MCF 10A (cell line): ENCODE measurements at regions of chr5 and their contacts with region 1.

Region 1: DNA sequence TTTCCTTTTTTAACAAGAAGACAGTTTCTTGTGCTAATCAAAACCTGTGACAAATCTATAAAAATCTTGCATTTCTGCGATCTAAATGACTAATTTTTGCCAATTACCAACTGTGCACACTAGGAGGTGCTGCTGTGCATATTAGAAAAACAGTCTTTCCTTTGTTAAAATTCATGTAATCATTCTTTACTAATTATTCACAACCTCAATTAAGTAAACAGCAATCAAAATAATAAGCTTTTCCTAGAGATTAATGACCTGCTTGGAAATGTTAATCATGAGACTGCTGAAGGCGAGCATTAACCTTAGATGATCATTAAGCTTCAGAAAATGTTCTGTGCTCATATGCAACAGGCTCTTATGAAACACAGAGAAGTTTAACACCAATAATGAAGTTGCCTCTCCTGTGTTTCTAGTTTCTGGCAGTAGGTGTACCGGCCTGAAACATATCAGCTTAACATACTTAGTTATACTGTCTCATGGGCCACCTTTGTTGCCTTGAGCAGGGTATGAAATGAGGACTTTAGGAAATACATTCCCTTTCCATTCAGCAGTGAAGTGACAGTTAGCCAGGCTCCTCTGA is 17.7 kb downstream of the RFESD start:
- DNase-seq: peak; percentile 46
- H3K4me3 Mint-ChIP-seq: no peak overlapping the region
- H3K27ac Mint-ChIP-seq: no peak overlapping the region
- H3K4me1 Mint-ChIP-seq: no peaks in the 10 kb centered on the region
- H3K27me3 Mint-ChIP-seq: no peaks in the 10 kb centered on the region
- CTCF ChIP-seq: peak; percentile 56

Region 2: DNA sequence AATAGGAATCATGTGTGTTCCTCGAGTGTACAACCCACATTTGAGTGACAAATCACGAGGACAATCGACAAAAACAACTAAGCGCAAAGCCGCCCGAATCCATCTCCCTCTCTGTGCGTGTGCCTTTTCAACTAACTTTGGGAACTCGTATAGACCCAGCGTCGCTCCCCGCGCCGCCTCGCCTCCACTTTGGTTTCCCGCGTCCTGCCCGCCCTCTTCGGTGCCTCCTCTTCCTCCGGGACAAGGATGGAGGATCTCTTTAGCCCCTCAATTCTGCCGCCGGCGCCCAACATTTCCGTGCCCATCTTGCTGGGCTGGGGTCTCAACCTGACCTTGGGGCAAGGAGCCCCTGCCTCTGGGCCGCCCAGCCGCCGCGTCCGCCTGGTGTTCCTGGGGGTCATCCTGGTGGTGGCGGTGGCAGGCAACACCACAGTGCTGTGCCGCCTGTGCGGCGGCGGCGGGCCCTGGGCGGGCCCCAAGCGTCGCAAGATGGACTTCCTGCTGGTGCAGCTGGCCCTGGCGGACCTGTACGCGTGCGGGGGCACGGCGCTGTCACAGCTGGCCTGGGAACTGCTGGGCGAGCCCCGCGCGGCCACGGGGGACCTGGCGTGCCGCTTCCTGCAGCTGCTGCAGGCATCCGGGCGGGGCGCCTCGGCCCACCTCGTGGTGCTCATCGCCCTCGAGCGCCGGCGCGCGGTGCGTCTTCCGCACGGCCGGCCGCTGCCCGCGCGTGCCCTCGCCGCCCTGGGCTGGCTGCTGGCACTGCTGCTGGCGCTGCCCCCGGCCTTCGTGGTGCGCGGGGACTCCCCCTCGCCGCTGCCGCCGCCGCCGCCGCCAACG is 44.0 kb before region 1 on chr5 and contains the start of gene GPR150:
- CTCF ChIA-PET with region 1: no interaction called
- POLR2A ChIA-PET with region 1: no interaction called
- intact Hi-C with region 1: no loop called
- DNase-seq: no peak
- H3K4me3 Mint-ChIP-seq: no peak within 1 kb of the TSS
- H3K27ac Mint-ChIP-seq: no peak within 1 kb of the TSS
- H3K4me1 Mint-ChIP-seq: peaks cover 9% of the 10 kb centered on the region
- H3K27me3 Mint-ChIP-seq: no peaks in the 10 kb centered on the region
- CTCF ChIP-seq: no peak
- total RNA-seq, gene GPR150: not detected in 2 replicates

Region 3: DNA sequence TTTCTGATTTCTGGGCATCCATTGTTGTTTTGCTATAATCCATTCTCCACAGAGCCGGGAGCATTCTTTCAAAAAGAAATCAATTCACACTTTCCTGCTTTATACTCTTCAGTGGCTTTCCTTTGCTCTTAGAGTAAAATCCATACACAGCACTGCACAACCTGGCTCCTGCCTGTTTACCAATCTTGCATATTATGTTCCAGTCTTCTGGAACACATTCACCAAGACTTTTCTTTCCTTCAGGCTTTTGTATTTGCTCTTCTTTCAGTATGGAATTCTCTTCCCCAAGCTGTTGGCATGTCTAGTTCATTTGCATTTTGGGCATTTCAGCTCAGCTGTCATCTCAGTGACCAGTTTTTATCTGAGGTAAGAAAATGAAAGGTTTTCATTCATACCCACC is 11.4 kb before region 1 on chr5:
- CTCF ChIA-PET with region 1: interaction called, 16 read pairs
- POLR2A ChIA-PET with region 1: interaction called, 11 read pairs
- intact Hi-C with region 1: no loop called
- DNase-seq: no peak
- H3K4me3 Mint-ChIP-seq: no peak overlapping the region
- H3K27ac Mint-ChIP-seq: no peak overlapping the region
- H3K4me1 Mint-ChIP-seq: peaks cover 6% of the 10 kb centered on the region
- H3K27me3 Mint-ChIP-seq: no peaks in the 10 kb centered on the region
- CTCF ChIP-seq: no peak

Region 4: GRCh38 chr5:95712347-95712958 is 48.2 kb after region 1 on chr5:
- CTCF ChIA-PET with region 1: interaction called, 6 read pairs
- POLR2A ChIA-PET with region 1: no interaction called
- intact Hi-C with region 1: loop called (anchors 2 kb)
- DNase-seq: peak; percentile 95
- H3K4me3 Mint-ChIP-seq: no peak overlapping the region
- H3K27ac Mint-ChIP-seq: no peak overlapping the region
- H3K4me1 Mint-ChIP-seq: peaks cover 33% of the 10 kb centered on the region
- H3K27me3 Mint-ChIP-seq: no peaks in the 10 kb centered on the region
- CTCF ChIP-seq: no peak

Region 5: DNA sequence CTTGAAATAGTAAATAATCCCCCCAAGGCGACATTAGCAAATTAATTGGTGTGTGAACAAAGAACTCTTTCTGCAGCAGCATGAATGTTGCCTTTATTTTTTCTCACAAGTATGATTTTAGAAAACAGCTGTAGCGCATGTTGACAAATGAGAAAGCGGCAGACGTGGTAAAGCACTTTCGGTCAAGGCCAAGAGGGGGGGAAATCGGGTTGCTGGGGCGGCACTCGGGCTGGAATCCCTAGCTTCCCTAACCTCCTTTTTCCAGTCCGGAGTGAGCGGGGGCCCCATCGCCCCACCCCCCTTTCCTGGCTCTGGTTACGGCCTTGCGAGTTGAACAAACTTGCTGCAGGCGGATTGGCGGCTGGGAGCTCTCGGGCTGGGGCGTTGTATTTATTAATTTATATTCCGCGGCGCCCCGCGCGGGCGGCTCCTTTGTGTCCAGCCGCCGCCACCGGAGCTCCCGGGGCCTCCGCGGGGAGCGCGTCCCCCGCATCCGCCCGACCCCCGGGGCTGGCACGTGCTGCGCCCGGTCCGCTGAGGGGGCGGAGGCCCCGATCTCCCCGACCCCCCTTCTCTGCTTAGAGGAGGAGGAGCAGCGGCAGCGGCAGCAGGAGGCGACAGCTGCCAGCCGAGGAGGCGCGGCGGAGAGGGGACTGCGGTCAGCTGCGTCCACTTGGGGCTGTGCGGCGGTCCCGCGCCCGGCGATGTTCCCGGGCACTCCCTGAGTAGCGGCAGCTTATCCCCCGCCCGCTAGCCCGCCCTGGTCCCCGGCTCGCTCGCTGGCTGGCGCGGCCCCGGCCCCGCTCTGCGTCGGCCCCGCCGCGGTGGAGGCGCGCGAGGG is 66.7 kb after region 1 on chr5 and contains the start of gene RHOBTB3:
- CTCF ChIA-PET with region 1: interaction called, 5 read pairs
- POLR2A ChIA-PET with region 1: interaction called, 4 read pairs
- intact Hi-C with region 1: loop called (anchors 5 kb)
- DNase-seq: peak; percentile 61
- H3K4me3 Mint-ChIP-seq: peak within 1 kb of the TSS; percentile 73
- H3K27ac Mint-ChIP-seq: no peak within 1 kb of the TSS
- H3K4me1 Mint-ChIP-seq: no peaks in the 10 kb centered on the region
- H3K27me3 Mint-ChIP-seq: no peaks in the 10 kb centered on the region
- CTCF ChIP-seq: no peak
- total RNA-seq, gene RHOBTB3: 3.4 and 3.8 TPM in 2 replicates

Region 6: DNA sequence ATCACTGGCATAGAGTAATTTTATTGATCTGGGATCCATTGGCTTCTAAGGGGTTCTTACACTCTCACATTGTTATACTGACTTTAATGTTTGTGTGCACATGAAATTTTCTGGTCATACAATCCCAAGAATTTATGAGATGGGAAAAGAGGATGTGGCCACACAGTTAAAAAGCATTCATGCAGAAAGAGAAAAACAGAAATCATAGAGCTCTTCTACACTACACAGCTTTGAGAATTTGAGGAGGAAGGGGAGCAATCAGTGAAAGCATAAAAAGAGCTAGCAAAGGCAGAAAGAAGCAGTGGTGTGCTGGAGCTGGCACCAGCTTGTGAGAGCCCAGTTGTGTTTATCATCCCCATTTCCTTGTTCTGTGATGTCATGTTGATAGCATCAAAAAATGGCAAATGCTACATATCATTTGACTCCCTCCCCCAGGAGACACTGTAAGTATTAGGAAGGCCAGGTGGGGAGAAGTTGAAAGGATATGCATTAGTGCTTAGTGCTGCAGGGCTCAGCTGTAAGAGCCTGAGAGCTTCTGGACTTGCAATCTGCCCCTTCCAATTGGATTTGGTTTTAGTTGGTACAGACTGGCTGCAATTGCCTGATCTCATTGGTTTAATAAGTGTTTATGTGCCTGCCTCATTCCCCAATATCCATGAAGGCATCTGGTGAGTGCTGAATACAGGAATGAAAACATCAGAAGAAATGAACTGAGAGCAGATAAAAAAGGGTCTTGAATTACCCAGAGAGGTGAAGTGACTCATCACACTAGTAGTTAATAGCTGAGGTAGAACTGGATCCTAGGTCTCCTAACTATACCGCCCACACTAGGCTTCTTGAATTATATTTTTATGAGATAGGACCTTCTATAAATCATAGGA is 97.7 kb after region 1 on chr5:
- CTCF ChIA-PET with region 1: interaction called, 11 read pairs
- POLR2A ChIA-PET with region 1: no interaction called
- intact Hi-C with region 1: no loop called
- DNase-seq: no peak
- H3K4me3 Mint-ChIP-seq: no peak overlapping the region
- H3K27ac Mint-ChIP-seq: no peak overlapping the region
- H3K4me1 Mint-ChIP-seq: peaks cover 6% of the 10 kb centered on the region
- H3K27me3 Mint-ChIP-seq: no peaks in the 10 kb centered on the region
- CTCF ChIP-seq: no peak

Region 7: GRCh38 chr5:95773335-95774059 is 109.2 kb after region 1 on chr5:
- CTCF ChIA-PET with region 1: interaction called, 31 read pairs
- POLR2A ChIA-PET with region 1: interaction called, 10 read pairs
- intact Hi-C with region 1: no loop called
- DNase-seq: peak; percentile 83
- H3K4me3 Mint-ChIP-seq: no peak overlapping the region
- H3K27ac Mint-ChIP-seq: no peak overlapping the region
- H3K4me1 Mint-ChIP-seq: peaks cover 13% of the 10 kb centered on the region
- H3K27me3 Mint-ChIP-seq: no peaks in the 10 kb centered on the region
- CTCF ChIP-seq: no peak

Region 8: DNA sequence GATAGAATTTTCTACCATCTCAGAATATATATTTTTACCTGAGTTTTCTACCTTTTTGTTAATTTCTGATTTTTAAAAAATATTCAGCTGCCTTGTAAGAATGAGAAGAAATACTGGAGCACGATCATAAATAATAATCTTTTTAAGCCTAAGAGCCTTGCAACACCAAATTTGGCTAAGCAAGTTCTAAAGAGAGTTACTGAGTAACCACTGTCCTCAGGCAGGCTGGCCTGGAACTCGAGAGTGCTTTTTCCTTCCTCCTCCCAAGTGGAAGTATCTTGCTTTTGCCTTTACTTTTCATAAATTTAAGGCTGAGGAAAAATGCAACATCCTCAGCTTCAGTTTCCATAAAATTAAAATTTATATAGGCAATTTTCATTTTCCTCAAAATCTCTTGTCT is 137.2 kb after region 1 on chr5:
- CTCF ChIA-PET with region 1: no interaction called
- POLR2A ChIA-PET with region 1: no interaction called
- intact Hi-C with region 1: no loop called
- DNase-seq: no peak
- H3K4me3 Mint-ChIP-seq: no peak overlapping the region
- H3K27ac Mint-ChIP-seq: no peak overlapping the region
- H3K4me1 Mint-ChIP-seq: no peaks in the 10 kb centered on the region
- H3K27me3 Mint-ChIP-seq: no peaks in the 10 kb centered on the region
- CTCF ChIP-seq: no peak